Esophagus muscularis mucosa (tissue), 4 donors: ENCODE measurements at regions of chr1 and their contacts with region 1.

Region 1: DNA sequence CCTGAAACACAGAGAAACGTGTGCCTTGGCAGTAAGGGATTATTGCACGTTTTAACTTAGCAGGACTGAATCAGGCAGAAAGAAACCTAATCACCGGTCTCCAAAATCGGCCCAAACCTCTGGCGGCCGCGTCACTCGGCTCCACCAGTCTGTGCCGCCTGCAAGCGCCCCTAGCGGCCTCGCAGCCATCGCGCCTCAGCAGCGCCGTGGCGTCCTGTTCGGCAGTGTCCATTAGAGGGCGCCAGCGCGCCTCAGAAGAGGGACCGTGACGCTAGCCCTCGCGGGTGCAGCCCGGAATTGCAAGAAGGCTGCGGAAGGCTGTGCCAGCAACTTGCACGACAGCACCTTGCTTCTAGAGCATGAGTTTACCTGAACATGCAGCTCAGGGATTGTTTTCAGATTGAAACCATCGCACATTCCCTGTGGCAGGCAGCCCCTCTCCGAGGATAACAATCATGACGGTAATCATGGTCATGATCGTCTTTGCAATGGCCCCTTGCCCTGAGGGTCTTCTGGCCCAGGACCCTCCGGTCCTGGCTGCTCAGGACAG is 164.4 kb downstream of the TRIM33 start:
- DNase-seq: peak; percentile 99
- H3K4me3 ChIP-seq: peak overlapping the region; percentile 57 to 61 (median 59)
- H3K27ac ChIP-seq: peak overlapping the region; percentile 79 to 88 (median 80)
- H3K4me1 ChIP-seq: peaks cover 11 to 13% (median 13%) of the 10 kb centered on the region in 4 donors
- H3K27me3 ChIP-seq: no peaks in the 10 kb centered on the region
- CTCF ChIP-seq: peak; percentile 100
- EP300 ChIP-seq: no peak
- POLR2A ChIP-seq: no peak

Region 2: GRCh38 chr1:114428083-114428749 is 81.7 kb after region 1 on chr1:
- intact Hi-C with region 1: loop called (anchors 2 kb)
- DNase-seq: no peak
- H3K4me3 ChIP-seq: no peak overlapping the region
- H3K27ac ChIP-seq: peak overlapping the region in 1 of 4 donors; percentile 5
- H3K4me1 ChIP-seq: peaks cover 0 to 11% (median 5%) of the 10 kb centered on the region in 4 donors
- H3K27me3 ChIP-seq: no peaks in the 10 kb centered on the region
- CTCF ChIP-seq: peak; percentile 48 to 54 (median 51)
- EP300 ChIP-seq: no peak
- POLR2A ChIP-seq: no peak

Region 3: DNA sequence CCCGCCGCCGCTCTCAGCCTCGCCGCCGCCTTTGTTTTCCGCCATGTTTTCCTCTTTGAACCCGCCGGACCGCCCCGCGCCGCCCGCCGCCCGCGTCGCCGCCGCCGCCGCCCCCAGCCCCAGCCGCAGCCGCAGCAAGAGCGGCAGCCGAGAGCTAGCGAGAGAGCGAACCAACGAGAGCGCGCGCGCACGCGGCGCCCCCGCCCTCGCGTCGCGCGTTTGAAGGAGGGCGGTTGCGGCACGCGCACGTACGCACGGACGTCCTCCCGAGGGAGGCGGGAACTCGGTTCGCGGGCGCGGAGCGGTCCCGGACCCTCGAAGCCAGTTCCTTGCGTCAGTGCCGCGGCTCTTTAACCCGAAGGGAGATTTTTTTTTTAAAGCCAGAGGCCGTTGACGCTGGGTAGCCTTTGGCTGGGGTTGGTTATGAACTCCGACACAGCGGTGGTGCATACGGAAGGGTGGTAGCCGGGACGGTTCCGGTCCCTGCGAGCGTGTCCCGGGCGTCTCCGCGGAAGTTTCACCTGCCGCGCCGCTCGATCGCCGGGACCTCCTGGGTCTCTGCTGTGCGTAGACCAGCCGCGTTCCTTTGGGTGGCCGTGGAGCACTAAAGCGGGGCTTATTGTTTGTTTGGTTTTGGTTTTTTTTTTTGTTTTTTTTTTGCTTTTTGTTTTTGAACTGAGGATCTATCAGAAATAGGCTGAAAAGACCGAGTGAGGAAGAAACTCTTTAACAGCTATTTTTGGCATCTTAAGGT is 164.7 kb after region 1 on chr1 and contains the start of gene TRIM33:
- intact Hi-C with region 1: loop called (anchors 5 kb)
- DNase-seq: peak; percentile 96
- H3K4me3 ChIP-seq: peak within 1 kb of the TSS; percentile 81 to 100 (median 98)
- H3K27ac ChIP-seq: peak within 1 kb of the TSS; percentile 95 to 98 (median 98)
- H3K4me1 ChIP-seq: peaks cover 18 to 46% (median 42%) of the 10 kb centered on the region in 4 donors
- H3K27me3 ChIP-seq: no peaks in the 10 kb centered on the region
- CTCF ChIP-seq: no peak
- EP300 ChIP-seq: no peak
- POLR2A ChIP-seq: peak; percentile 54
- total RNA-seq, gene TRIM33: 28.0 to 36.6 (median 29.5) TPM

Region 4: DNA sequence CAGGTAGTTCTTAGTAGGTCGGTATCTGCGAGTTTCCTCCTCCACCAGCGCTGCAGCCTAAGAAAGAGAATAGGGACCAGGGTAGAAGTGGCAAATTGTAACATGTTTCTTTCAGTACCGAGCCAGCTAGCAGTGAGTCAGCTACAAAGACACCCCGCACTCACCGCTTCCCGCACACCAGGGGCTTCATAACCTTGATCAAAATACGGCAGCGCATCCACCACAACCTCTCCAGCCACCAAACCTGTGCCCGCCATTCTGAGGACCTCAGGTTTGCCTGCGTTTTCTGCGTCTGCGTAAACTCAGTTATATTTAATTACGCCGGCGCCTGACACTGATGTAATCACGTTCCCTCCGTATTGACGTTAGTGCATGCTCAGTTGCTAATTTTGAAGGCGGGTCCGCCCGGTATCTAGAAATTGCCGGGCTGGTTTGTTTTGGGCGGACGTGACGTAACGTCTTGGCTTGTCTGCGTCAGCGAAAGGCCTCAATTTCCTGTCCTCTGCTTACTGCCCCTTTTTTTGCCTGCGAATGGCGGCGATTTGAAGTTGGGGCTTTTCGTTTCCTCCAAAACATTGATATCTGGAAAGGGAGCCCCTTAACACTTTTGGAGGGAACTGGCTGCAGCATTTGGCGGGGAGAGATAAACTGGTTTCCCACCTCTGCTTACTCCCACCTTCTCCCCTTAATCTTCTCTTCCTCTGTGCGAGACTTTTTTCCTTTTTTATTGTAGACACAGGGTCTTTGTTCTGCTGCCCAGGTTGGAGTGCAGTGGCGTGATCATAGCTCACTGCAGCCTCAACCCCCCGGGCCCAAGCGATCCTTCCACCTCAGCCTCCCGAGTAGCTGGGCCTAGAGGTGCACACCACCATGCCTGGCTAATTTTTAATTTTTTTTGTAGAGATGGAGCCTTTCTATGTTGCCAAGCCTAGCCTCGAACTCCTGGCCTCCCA is 235.1 kb after region 1 on chr1 and contains the start of gene BCAS2:
- intact Hi-C with region 1: loop called (anchors 10 kb)
- DNase-seq: peak; percentile 99
- H3K4me3 ChIP-seq: peak within 1 kb of the TSS; percentile 65 to 80 (median 68)
- H3K27ac ChIP-seq: peak within 1 kb of the TSS; percentile 88 to 93 (median 90)
- H3K4me1 ChIP-seq: peaks cover 31 to 42% (median 37%) of the 10 kb centered on the region in 4 donors
- H3K27me3 ChIP-seq: no peaks in the 10 kb centered on the region
- CTCF ChIP-seq: no peak
- EP300 ChIP-seq: peak; percentile 68
- POLR2A ChIP-seq: peak; percentile 62
- total RNA-seq, gene BCAS2: 25.9 to 44.0 (median 34.1) TPM